A673 (cell line): ENCODE measurements at regions of chr3 and their contacts with region 1.

Region 1: DNA sequence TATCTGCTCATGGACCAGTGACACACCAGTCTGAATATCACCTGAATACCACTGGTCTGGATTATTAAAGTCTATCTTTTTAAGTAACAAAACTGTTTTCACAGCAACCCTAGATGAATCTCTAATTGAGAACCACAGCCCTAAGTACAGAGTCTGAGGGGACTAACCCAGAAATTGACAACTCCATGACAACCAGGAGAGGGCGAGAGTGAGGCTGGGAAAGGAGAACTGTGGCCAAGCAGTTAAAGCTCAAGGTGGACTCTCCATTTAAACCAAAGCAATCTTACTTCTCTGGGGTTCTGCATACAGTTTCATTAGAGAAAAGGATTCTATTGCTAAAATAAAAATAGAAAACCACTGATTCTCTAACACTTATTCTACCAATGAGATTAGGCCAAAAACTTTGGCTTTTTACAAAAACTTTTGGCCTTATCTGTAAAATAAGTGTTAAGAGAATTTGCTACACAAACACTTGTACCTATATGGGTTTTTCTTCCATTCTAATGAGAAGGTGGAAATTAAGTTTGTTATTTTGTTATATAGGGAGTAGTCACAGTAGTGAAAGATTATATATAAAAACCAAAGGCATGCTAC is 11.4 kb downstream of the NEK10 start:
- DNase-seq: peak; percentile 75
- H3K4me3 ChIP-seq: no peak overlapping the region
- H3K27ac ChIP-seq: no peak overlapping the region
- H3K4me1 ChIP-seq: peaks cover 16% of the 10 kb centered on the region
- H3K27me3 ChIP-seq: no peaks in the 10 kb centered on the region
- CTCF ChIP-seq: peak; percentile 77

Region 2: GRCh38 chr3:27165321-27165721 is 192.4 kb before region 1 on chr3:
- CTCF ChIA-PET with region 1: no interaction called
- POLR2A ChIA-PET with region 1: no interaction called
- intact Hi-C with region 1: no loop called
- DNase-seq: no peak
- H3K4me3 ChIP-seq: no peak overlapping the region
- H3K27ac ChIP-seq: no peak overlapping the region
- H3K4me1 ChIP-seq: no peaks in the 10 kb centered on the region
- H3K27me3 ChIP-seq: no peaks in the 10 kb centered on the region
- CTCF ChIP-seq: no peak

Region 3: GRCh38 chr3:27244374-27244773 is 113.4 kb before region 1 on chr3:
- CTCF ChIA-PET with region 1: no interaction called
- POLR2A ChIA-PET with region 1: no interaction called
- intact Hi-C with region 1: no loop called
- DNase-seq: no peak
- H3K4me3 ChIP-seq: no peak overlapping the region
- H3K27ac ChIP-seq: no peak overlapping the region
- H3K4me1 ChIP-seq: no peaks in the 10 kb centered on the region
- H3K27me3 ChIP-seq: no peaks in the 10 kb centered on the region
- CTCF ChIP-seq: no peak

Region 4: DNA sequence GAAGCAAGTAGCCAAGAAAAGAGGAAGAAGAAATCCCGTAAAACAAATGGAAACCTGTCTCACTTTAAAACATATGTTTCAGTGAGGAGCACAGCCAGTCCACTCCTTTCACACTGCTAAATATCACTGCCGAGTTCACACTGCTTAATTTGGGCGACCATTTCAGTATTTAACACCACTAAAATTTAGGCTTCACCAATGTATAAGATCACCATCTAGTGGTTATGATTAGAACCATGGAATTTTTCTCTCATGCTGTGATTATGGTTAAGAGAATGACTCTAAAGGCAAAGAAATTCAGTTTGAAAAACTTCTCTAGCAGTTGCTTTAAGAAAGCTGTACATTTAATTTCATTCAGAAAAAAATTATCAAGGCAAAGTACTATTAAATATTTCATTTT is 109.8 kb after region 1 on chr3:
- CTCF ChIA-PET with region 1: interaction called, 5 read pairs
- POLR2A ChIA-PET with region 1: no interaction called
- intact Hi-C with region 1: loop called (anchors 1 kb)
- DNase-seq: peak; percentile 78
- H3K4me3 ChIP-seq: no peak overlapping the region
- H3K27ac ChIP-seq: no peak overlapping the region
- H3K4me1 ChIP-seq: peaks cover 4% of the 10 kb centered on the region
- H3K27me3 ChIP-seq: no peaks in the 10 kb centered on the region
- CTCF ChIP-seq: peak; percentile 73